Activated naive CD4-positive, alpha-beta T cell treated with anti-CD3 and anti-CD28 coated beads for 36 hours (primary cell): ENCODE measurements at regions of chr6 and their contacts with region 1.

Region 1: GRCh38 chr6:136643850-136644596 is 93.8 kb upstream of the MAP7 start:
- DNase-seq: peak; percentile 93
- H3K4me3 Mint-ChIP-seq: no peak overlapping the region
- H3K27ac Mint-ChIP-seq: no peak overlapping the region
- H3K4me1 Mint-ChIP-seq: no peaks in the 10 kb centered on the region
- H3K27me3 Mint-ChIP-seq: no peaks in the 10 kb centered on the region

Region 2: DNA sequence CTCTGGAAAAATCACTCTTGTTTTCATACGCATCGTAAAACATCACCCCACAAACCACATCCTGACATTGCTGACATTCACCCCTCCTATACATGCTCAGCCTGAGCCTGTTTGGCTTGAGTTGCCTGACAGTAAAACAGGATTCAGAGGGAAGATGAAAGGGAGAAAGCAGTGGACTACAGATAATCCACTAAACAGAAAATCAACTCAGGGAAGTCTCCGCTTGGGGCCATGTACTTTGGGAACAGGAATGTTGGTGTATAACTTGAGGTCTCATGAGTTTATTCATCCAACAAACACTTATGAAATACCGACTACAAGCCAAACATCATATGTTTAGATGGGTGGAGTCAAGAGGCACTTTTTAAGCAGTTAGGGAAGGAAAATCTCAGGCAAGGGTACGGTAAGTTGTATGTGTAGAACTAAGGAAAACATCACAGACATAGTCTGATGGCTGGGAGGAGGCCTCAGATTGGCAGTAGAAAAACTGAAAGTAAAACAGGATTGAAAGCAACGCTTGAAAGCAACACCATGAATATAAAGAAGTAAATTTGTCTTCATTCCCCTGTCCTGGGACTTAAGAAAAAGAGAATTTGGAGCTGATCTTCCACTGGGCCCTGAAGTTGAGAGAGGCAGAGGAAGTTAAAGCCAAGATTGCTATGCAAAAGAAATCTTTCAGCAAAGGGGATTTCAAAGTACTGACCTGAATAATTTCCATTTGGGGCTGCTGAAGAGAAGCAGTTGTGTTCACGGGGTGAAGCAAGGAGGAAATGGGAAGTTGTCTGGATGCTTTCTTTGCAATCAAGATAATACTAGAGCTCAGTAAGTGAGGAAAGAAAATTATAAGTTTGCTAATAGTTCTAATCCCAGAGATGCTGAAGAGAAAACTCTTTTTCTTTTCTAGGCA is 763.7 kb before region 1 on chr6:
- CTCF ChIA-PET with region 1: no interaction called
- intact Hi-C with region 1: no loop called
- DNase-seq: peak; percentile 75
- H3K4me3 Mint-ChIP-seq: peak overlapping the region; percentile 77
- H3K27ac Mint-ChIP-seq: peak overlapping the region; percentile 98
- H3K4me1 Mint-ChIP-seq: peaks cover 64% of the 10 kb centered on the region
- H3K27me3 Mint-ChIP-seq: no peaks in the 10 kb centered on the region

Region 3: GRCh38 chr6:136582711-136583471 is 61.1 kb before region 1 on chr6:
- CTCF ChIA-PET with region 1: no interaction called
- intact Hi-C with region 1: loop called (anchors 1 kb)
- DNase-seq: no peak
- H3K4me3 Mint-ChIP-seq: no peak overlapping the region
- H3K27ac Mint-ChIP-seq: no peak overlapping the region
- H3K4me1 Mint-ChIP-seq: no peaks in the 10 kb centered on the region
- H3K27me3 Mint-ChIP-seq: no peaks in the 10 kb centered on the region

Region 4: DNA sequence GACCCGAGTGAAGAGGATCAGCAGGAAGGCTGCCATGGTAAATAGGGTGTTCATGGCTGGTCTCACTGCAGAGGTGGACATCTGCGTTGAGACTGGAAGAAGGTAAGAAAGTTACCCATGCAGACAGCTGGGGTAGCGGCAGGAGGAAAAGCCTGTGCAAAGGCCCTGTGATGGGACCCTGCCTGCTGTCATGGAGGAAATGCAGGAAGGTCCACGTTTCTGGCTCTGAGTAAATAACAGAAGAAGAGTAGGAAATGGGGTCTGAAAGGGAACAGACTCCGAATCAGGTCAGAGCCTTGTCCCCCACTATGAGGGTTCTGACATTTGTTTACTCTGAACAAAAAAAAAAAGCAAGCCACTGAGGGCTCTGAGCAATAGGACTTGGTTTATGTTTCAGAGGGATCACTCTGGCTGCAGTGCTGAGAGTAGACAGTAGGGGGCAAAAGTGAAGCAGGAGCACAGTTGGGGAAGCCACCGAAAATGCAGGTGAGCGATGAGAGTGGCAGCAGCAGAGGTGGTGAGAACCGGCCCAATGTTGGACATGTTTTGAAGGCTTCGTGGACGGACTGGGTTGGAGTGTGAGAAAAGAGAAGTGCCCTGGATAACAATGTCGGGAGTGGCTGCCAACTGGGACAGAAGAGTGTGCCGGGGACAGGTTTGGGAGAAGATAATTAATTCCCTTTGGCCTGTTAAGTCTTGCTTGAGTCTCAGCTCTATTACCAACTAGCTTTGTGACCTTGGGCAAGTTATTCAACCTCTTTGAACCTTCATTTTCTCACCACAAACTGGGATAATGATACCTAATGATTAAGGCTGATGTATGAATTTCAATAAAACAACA is 35.9 kb before region 1 on chr6:
- CTCF ChIA-PET with region 1: interaction called, 6 read pairs
- intact Hi-C with region 1: loop called (anchors 1 kb)
- DNase-seq: peak; percentile 92
- H3K4me3 Mint-ChIP-seq: no peak overlapping the region
- H3K27ac Mint-ChIP-seq: no peak overlapping the region
- H3K4me1 Mint-ChIP-seq: peaks cover 12% of the 10 kb centered on the region
- H3K27me3 Mint-ChIP-seq: no peaks in the 10 kb centered on the region

Region 5: GRCh38 chr6:136751522-136751956 is 107.5 kb after region 1 on chr6:
- CTCF ChIA-PET with region 1: interaction called, 11 read pairs
- intact Hi-C with region 1: loop called (anchors 1 kb)
- DNase-seq: peak; percentile 55
- H3K4me3 Mint-ChIP-seq: peak overlapping the region; percentile 23
- H3K27ac Mint-ChIP-seq: peak overlapping the region; percentile 74
- H3K4me1 Mint-ChIP-seq: peaks cover 67% of the 10 kb centered on the region
- H3K27me3 Mint-ChIP-seq: no peaks in the 10 kb centered on the region

Region 6: DNA sequence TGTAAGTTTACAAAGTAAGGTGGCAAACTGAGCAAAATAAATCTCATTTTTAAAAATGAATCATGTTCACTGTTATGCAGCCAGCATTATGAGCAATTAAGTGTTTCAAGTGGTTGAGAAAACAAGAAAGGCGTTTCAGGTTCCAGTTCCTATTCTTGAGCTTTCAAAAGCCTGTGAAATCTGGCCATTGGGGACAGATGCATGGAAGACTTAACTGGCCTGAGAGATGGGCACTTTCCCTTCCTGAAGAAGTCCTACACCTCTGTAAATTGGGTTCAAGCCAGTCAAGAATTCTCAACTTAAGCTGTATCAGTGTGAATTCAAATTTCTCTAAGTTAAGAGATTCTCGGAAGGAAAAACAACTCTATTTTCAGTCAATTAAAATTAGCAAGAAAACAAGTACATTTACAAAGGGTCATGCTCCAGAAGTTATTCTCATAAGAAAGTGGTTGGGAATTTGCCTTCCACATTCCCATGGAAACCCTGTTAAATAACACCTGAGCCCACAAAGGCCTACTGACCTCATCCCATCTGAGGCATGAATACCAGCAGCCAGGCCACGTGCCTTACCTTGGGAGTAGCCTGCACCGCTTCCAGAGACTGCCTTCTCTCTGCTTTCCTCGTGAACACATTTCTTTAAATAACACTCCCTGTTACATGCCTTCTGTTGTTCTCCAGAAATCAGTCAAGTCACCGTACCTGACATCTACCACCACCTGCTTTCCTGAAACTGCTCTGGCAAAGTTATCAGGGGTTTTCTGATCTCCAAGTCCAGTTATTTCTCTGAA is 128.9 kb after region 1 on chr6:
- CTCF ChIA-PET with region 1: interaction called, 11 read pairs
- intact Hi-C with region 1: no loop called
- DNase-seq: no peak
- H3K4me3 Mint-ChIP-seq: no peak overlapping the region
- H3K27ac Mint-ChIP-seq: no peak overlapping the region
- H3K4me1 Mint-ChIP-seq: peaks cover 39% of the 10 kb centered on the region
- H3K27me3 Mint-ChIP-seq: no peaks in the 10 kb centered on the region

Region 7: DNA sequence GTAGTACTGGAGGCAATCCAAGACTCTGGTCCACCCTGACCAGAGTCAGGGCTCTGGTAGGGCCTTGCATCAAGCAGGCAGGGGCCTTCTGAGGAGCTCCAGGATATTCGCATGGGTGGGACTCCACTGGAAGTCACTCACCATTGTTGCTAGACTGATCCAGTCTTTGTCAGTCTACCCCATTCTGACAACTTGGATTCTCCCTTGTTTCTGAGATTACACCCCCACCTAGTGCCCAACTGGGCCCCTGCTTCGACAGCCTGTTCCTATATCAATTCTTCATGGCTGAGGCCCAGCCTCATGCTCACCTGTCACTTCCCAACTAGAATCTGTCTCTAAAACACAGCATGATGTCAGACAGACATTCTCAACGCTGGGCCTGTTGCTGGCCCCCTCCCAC is 283.3 kb after region 1 on chr6:
- CTCF ChIA-PET with region 1: interaction called, 6 read pairs
- intact Hi-C with region 1: loop called (anchors 1 kb)
- DNase-seq: peak; percentile 53
- H3K4me3 Mint-ChIP-seq: no peak overlapping the region
- H3K27ac Mint-ChIP-seq: no peak overlapping the region
- H3K4me1 Mint-ChIP-seq: peaks cover 13% of the 10 kb centered on the region
- H3K27me3 Mint-ChIP-seq: peaks cover 46% of the 10 kb centered on the region